ENCODE measurements at regions of chr20 and their contacts with region 1.

Region 1: GRCh38 chr20:22846863-22847262 is 188.2 kb upstream of the SSTR4 start:
- DNase-seq: no peak
- ATAC-seq: no peak
- H3K4me3 ChIP-seq: no peak overlapping the region
- H3K27ac ChIP-seq: 0 out of 6 replicates have a peak overlapping the region, but pooled peaks of 1 of the 2 experiments have one; percentile 13
- H3K4me1 ChIP-seq: peaks cover 7% of the 10 kb centered on the region; the same call in 2 of the 3 replicates
- CTCF ChIP-seq: no peak
- EP300 ChIP-seq: no peak
- POLR2A ChIP-seq: no peak
- RAD21 ChIP-seq: no peak

Region 2: DNA sequence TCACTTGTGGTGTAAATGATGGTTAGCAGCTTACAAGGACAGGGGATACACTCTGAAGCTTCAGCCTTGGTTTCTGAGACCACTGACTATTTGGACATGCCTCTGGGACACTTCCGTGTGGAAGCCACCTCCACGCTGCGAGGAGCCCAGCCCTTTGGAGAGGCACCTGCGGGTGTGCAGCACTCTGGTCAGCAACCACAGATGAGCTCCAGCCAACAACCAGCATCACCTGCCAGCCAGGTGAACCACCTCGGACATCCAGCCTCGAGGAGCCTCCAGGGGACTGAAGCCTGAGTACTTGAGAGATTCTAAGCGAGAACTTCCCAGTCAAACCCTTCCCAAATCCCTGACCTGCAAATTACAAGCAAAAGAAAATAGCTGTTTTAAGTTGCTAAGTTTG is 79.3 kb before region 1 on chr20:
- CTCF ChIA-PET with region 1: no interaction called
- POLR2A ChIA-PET with region 1: no interaction called
- DNase-seq: no peak
- ATAC-seq: no peak
- H3K4me3 ChIP-seq: no peak overlapping the region
- H3K27ac ChIP-seq: peak overlapping the region; percentile 92 to 98
- H3K4me1 ChIP-seq: peaks cover 61% of the 10 kb centered on the region
- CTCF ChIP-seq: no peak
- EP300 ChIP-seq: no peak
- POLR2A ChIP-seq: no peak
- RAD21 ChIP-seq: no peak

Region 3: DNA sequence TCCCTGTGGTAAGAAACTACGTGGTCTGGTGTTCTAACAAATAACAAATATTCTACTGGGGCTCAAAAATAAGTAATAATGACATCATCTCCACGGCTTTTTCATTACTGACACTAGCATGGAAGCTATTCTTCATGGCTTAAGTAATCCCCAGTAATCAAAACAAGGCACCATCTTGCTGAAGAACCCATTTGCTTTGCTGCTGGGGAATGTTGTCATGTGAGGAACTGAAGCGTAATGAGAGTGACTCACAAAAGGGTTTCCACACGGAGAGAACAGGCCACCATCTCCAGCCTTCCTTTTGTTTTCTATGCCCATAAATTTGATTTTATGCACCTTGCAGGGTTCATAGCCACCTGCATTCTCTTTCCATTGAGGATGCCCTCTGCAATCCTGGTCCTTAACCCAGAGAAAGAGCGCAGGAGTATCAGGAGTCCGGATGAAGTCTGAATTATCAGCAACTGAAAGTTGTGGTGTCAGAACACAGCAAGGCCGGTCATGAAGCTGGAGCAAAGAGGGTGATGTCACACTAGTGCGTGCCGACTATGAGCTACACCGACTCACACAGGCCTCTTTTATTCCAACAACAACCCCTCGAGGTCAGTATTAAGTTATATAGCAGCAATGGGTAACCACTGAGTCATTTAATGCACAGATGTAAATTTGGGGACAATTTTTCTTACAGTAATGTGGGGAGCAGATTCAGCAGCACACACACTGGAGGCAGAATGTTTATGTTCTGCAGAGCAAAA is 14.5 kb after region 1 on chr20:
- CTCF ChIA-PET with region 1: interaction called, 21 read pairs
- POLR2A ChIA-PET with region 1: no interaction called
- DNase-seq: no peak
- ATAC-seq: no peak
- H3K4me3 ChIP-seq: no peak overlapping the region
- H3K27ac ChIP-seq: peak overlapping the region in 1 of 2 experiments; percentile 43; a peak in 3 of 6 replicates
- H3K4me1 ChIP-seq: peaks cover 7% of the 10 kb centered on the region; the same call in 2 of the 3 replicates
- CTCF ChIP-seq: no peak
- EP300 ChIP-seq: no peak
- POLR2A ChIP-seq: no peak
- RAD21 ChIP-seq: no peak

Region 4: GRCh38 chr20:22866812-22867341 is 20.0 kb after region 1 on chr20:
- CTCF ChIA-PET with region 1: interaction called, 21 read pairs
- POLR2A ChIA-PET with region 1: no interaction called
- DNase-seq: peak; percentile 16 to 33
- ATAC-seq: peak; percentile 70 to 73; a peak in 4 of 6 replicates
- H3K4me3 ChIP-seq: no peak overlapping the region
- H3K27ac ChIP-seq: peak overlapping the region; percentile 57 to 67
- H3K4me1 ChIP-seq: peaks cover 21% of the 10 kb centered on the region
- CTCF ChIP-seq: no peak
- EP300 ChIP-seq: peak in 1 of 2 experiments; percentile 38; a peak in 1 of 5 replicates
- POLR2A ChIP-seq: no peak
- RAD21 ChIP-seq: no peak

Region 5: GRCh38 chr20:23086056-23086566 is 239.2 kb after region 1 on chr20 and contains the start of gene CD93:
- CTCF ChIA-PET with region 1: no interaction called
- POLR2A ChIA-PET with region 1: no interaction called
- DNase-seq: no peak
- ATAC-seq: no peak
- H3K4me3 ChIP-seq: no peak within 1 kb of the TSS
- H3K27ac ChIP-seq: no peak within 1 kb of the TSS
- H3K4me1 ChIP-seq: no peaks in the 10 kb centered on the region
- CTCF ChIP-seq: no peak
- EP300 ChIP-seq: no peak
- POLR2A ChIP-seq: no peak
- RAD21 ChIP-seq: no peak
- polyA plus RNA-seq, gene CD93: not detected in 2 replicates

Region 6: DNA sequence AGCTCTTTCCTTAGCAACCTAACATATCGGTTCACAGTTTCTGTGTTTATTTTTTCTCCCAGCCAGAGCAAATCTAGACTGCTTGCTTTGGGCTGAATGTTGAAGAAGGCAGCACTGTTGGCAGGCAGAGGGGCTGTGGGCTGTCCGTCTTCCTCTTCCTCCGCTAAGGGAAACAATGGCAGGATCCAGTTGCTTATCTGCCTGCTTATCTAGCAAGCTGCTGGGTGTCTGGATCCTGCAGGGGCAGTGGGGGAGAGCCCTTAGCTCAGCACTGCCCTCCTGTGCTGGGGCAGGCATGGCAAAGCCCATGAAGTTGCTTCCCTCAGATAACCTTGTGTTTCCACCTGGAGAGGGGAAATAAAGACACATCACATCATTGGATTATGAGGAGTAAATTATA is 331.9 kb after region 1 on chr20:
- CTCF ChIA-PET with region 1: no interaction called
- POLR2A ChIA-PET with region 1: no interaction called
- DNase-seq: no peak
- ATAC-seq: 0 out of 6 replicates have a peak, but pooled peaks of 1 of the 2 experiments have one; percentile 30
- H3K4me3 ChIP-seq: no peak overlapping the region
- H3K27ac ChIP-seq: no peak overlapping the region
- H3K4me1 ChIP-seq: no peaks in the 10 kb centered on the region
- CTCF ChIP-seq: no peak
- EP300 ChIP-seq: no peak
- POLR2A ChIP-seq: no peak
- RAD21 ChIP-seq: no peak